HepG2 (cell line): ENCODE measurements at regions of chr5 and their contacts with region 1.

Region 1: DNA sequence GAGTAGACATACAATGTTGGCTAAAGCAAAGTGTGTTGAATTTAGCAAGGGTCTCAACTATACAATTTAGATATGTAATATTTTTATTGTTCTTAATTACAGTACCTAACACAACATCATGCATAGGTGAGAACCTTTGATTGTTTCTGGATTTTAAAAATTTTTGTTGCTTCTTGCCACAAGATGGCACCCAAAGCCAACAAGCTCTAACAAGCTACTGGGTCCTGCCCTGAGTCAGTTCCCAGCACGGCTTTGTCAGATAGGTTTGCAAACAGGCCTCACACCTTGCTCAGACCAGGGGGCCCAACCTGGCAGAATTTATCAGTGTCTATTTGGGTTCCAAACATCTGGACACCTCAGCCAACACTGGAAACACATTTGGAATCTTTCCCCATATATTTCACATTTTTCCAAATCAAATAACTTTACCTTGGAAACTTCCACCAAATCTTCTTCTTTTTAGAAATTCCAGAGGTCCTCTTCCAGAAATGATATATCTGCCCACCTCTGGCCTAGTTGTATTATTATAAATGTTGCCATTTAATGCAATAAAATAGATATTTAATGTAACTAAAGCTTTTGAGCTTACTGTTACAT is 49.5 kb upstream of the EGFLAM start:
- DNase-seq: peak; percentile 46
- ATAC-seq: peak; percentile 82
- H3K4me3 ChIP-seq: no peak overlapping the region
- H3K27ac ChIP-seq: no peak overlapping the region
- H3K4me1 ChIP-seq: no peaks in the 10 kb centered on the region
- H3K27me3 ChIP-seq: no peaks in the 10 kb centered on the region; a peak in 1 of 5 replicates
- CTCF ChIP-seq: peak; percentile 77
- EP300 ChIP-seq: no peak
- POLR2A ChIP-seq: no peak
- RAD21 ChIP-seq: peak; percentile 44; the same call in 1 of the 2 replicates

Region 2: GRCh38 chr5:38008198-38008597 is 200.7 kb before region 1 on chr5:
- CTCF ChIA-PET with region 1: no interaction called
- POLR2A ChIA-PET with region 1: no interaction called
- in situ Hi-C with region 1: no loop called
- intact Hi-C with region 1: no loop called
- DNase-seq: no peak
- ATAC-seq: no peak
- H3K4me3 ChIP-seq: no peak overlapping the region
- H3K27ac ChIP-seq: no peak overlapping the region
- H3K4me1 ChIP-seq: peaks cover 15% of the 10 kb centered on the region
- H3K27me3 ChIP-seq: peaks cover 0 to 22% of the 10 kb centered on the region in 2 experiments; a peak in 4 of 5 replicates
- CTCF ChIP-seq: no peak
- EP300 ChIP-seq: no peak
- POLR2A ChIP-seq: no peak
- RAD21 ChIP-seq: no peak

Region 3: DNA sequence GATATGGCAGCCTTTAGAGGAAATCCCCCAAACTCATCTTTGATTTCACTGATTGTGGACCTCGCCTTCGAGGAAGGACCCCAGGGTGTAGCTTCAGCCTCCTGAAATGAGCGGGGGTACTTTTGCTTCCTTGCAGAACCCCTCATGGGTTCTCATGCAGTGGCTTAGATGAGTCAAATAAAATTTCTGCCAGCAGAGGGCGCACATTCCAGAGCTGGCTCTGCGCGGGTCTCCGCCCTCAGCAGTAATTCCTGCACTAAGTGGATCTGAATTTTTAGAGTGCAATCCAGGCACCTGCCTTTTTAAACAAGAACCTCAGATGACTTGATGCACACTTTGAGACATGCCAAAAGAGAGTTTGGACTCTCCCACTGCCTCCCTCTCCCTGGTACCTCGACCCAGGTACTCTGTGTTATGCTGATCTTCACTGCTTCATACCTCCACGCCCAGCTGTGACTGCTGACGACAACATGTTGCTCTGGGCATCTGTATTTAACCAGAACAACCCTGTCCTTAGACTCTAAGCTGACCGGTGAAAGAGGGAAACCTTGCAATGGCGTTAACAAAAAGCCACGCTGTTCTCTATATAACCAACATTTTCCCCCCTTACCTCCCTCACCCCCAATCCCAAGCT is 56.8 kb after region 1 on chr5:
- CTCF ChIA-PET with region 1: no interaction called
- POLR2A ChIA-PET with region 1: no interaction called
- in situ Hi-C with region 1: no loop called
- intact Hi-C with region 1: loop called (anchors 2 kb)
- DNase-seq: peak; percentile 45
- ATAC-seq: peak; percentile 94
- H3K4me3 ChIP-seq: no peak overlapping the region
- H3K27ac ChIP-seq: no peak overlapping the region
- H3K4me1 ChIP-seq: peaks cover 25% of the 10 kb centered on the region
- H3K27me3 ChIP-seq: peaks cover 0 to 3% of the 10 kb centered on the region in 2 experiments; a peak in 1 of 5 replicates
- CTCF ChIP-seq: peak; percentile 72
- EP300 ChIP-seq: no peak
- POLR2A ChIP-seq: no peak
- RAD21 ChIP-seq: peak; percentile 8; the same call in 1 of the 2 replicates

Region 4: DNA sequence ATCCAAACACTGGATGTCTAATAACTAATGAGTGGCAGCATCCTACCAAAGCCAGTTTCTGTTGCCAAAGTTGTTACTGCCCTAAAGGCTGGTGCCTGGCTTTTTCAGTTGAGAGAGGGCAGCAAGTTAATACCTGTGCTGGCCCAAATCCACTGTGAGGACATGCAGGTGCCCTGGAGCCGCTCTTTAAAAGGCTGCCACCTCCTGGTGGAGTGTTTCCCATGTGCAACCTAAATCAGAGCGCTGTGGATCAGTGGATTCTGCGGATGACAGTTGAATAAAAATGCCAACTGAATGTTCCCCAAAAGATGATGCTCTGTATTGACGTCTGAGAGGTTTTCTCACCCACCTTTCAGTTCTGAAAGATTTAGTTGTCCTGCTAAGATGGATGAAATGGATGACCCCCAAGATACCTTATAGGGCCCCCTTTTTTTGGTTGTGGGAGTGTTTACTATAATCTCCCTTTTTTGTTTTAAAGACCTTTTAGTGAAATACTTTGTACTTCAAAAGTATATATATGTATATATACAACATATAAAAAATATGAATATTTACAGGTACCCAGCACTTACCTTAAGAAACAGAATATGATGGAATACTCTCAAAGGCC is 195.9 kb after region 1 on chr5:
- CTCF ChIA-PET with region 1: interaction called, 12 read pairs
- POLR2A ChIA-PET with region 1: no interaction called
- in situ Hi-C with region 1: loop called (anchors 5 kb)
- intact Hi-C with region 1: loop called (anchors 1 kb)
- DNase-seq: peak; percentile 24
- ATAC-seq: peak; percentile 83
- H3K4me3 ChIP-seq: no peak overlapping the region
- H3K27ac ChIP-seq: no peak overlapping the region
- H3K4me1 ChIP-seq: no peaks in the 10 kb centered on the region
- H3K27me3 ChIP-seq: peaks cover 0 to 14% of the 10 kb centered on the region in 2 experiments; a peak in 1 of 5 replicates
- CTCF ChIP-seq: peak; percentile 71
- EP300 ChIP-seq: no peak
- POLR2A ChIP-seq: no peak
- RAD21 ChIP-seq: peak; percentile 49; the same call in 1 of the 2 replicates